Left ventricle myocardium inferior (tissue), 1 donor: ENCODE measurements at regions of chr2 and their contacts with region 1.

Region 1: DNA sequence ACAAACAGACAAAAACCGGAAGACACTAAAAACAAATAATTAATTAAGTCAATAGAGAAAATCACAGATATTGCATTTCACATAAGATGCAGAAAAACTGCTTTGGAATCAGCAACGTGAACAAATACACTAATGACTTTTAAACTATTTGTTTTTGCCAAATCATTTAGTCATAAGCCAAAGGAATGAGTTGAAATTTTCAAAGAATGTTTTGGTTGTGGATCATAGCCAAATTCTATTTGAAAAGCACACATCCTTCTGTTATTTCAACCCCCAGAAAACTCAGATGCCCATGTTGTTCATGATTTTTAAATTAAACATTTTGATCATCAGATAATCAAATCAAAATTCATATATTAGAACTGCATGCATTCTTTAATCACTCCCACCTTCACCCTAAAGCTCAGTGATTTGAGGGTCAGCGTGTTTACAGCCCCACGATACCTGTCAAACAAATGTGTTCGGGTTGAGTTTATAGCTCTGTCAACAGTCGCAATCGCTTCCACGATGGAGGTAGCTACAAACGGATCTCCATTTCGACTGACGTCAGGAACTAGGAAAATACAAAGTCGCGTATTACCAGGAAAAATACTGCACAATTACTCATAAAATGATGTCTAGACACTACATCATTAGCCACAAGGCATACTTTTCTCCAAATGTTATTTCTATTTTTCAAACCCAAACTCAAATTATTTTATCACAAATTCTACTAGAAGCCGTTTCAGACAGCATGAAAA is 90.2 kb downstream of the PXDN start:
- DNase-seq: no peak
- H3K4me3 ChIP-seq: no peak overlapping the region
- H3K27ac ChIP-seq: peak overlapping the region; percentile 75
- H3K4me1 ChIP-seq: peaks cover 38% of the 10 kb centered on the region
- H3K27me3 ChIP-seq: peaks cover 5% of the 10 kb centered on the region
- CTCF ChIP-seq: no peak

Region 2: DNA sequence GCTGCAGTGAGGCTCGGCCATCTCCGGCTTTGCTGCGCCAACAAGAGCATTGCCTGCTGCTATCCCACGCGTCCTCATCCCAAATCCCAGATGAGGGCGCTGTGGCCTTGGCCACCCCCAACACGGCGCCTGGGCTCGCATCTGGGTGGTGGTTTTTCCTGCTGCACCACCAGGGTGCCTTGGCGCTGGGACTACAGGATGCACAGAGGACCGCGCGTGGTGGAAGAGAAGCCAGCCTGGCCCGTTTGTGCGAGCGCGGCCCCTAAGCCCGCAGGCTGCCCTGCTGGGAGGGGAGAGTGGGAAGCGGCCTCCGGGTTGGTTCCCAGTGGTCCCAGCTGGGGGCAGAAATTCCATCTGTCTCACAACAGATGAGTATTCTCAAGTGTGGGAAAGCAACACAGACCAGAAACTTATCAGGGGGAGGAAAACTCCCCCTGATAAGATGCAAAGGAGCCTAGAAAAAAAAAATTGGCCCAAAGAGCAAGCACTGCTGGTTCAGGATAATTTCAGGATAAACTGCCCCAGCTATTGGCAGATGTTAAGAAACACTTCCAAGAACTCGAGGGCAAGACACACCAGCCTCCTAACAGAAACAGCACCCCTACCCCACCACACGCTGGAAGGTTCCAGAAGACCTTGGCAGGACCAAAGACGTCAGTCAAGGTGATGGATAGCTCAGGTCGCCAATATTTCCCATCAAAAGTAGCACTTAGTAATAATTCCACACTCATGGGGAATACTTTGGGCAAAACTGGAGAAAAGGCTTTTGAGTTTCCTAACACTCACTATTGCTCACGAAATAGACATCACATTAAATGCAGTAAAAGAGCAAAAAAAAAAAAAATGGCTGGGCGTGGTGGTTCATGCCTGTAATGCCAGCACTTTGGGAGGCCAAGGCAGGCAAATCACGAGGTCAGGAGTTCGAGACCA is 61.9 kb before region 1 on chr2:
- intact Hi-C with region 1: loop called (anchors 10 kb)
- DNase-seq: peak; percentile 72
- H3K4me3 ChIP-seq: peak overlapping the region; percentile 51
- H3K27ac ChIP-seq: peak overlapping the region; percentile 81
- H3K4me1 ChIP-seq: peaks cover 52% of the 10 kb centered on the region
- H3K27me3 ChIP-seq: peaks cover 35% of the 10 kb centered on the region
- CTCF ChIP-seq: peak; percentile 72

Region 3: GRCh38 chr2:1773883-1774282 is 119.8 kb after region 1 on chr2:
- intact Hi-C with region 1: no loop called
- DNase-seq: no peak
- H3K4me3 ChIP-seq: no peak overlapping the region
- H3K27ac ChIP-seq: no peak overlapping the region
- H3K4me1 ChIP-seq: no peaks in the 10 kb centered on the region
- H3K27me3 ChIP-seq: peaks cover 28% of the 10 kb centered on the region
- CTCF ChIP-seq: no peak